ENCODE measurements at regions of chr21 and their contacts with region 1.

Region 1: DNA sequence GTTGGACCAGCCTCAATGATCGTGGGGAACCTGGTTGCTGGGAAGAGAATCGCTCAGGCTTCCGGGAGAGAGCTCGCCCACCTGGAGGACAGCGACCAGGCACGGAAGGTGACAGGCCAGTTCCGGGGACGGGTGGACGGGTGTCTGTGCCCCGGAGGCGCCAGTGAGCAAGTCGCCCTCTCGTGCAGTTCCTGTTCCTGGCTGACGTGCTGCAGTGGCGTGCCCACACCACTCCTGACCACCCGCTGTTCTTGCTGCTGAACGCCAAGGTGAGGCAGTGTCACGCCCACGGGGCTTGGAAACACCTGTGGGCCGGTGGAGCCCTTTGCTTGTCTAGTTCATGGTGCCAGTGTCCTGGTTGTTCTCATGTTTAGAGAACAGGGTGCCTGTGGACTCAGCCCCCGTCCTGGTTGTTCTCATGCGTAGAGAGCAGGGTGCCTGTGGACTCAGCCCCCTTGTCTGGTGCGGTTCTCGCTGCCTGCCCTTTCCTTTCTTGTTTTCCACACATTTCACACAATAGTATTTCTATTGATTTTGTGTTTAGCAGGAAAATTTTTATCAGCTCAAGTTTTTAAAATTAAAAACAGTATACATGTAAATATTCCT is 53.1 kb downstream of the S100B start:
- DNase-seq: peak in 9 of 10 donors; percentile 29 to 73 (median 50)
- ATAC-seq: peak; percentile 27 to 43
- H3K4me3 Mint-ChIP-seq: peak overlapping the region; percentile 62 to 90 (median 85)
- H3K27ac Mint-ChIP-seq: peak overlapping the region; percentile 97 to 100 (median 99)
- H3K4me1 Mint-ChIP-seq: peaks cover 39 to 91% (median 83%) of the 10 kb centered on the region in 4 donors
- H3K27me3 Mint-ChIP-seq: no peaks in the 10 kb centered on the region

Region 2: DNA sequence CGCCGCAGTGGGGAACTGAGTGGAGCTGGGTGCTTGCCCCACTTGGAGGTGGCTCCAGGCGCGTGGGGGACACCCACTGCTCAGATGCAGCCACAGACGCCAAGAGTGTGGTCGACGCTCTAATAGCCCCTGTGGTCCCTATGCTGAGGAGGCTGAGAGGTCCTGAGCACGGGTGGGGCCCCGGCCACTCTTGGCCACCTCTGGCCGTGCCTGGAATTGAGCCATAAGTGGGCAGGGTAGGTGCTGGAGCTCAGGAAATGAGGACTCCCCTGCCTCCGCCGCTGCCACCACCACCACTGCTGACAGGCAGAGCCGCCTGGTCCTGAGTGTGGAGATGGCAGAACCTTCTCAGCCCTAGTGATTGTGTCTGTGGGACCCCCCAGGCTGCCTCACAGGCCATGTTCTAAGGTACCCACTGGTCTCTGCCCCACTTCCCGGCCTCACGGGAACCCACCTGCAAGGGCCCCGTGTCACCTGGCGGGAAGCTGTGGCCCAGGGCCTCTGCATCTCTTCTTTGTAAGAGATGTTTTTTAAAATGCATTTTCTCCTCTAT is 127.6 kb before region 1 on chr21:
- POLR2A ChIA-PET with region 1: interaction called, 35 read pairs
- DNase-seq: peak in 8 of 10 donors; percentile 25 to 74 (median 50)
- ATAC-seq: peak; percentile 27 to 54
- H3K4me3 Mint-ChIP-seq: peak overlapping the region; percentile 72 to 92 (median 88)
- H3K27ac Mint-ChIP-seq: peak overlapping the region; percentile 94 to 100 (median 99)
- H3K4me1 Mint-ChIP-seq: peaks cover 13 to 46% (median 43%) of the 10 kb centered on the region in 4 donors
- H3K27me3 Mint-ChIP-seq: no peaks in the 10 kb centered on the region

Region 3: DNA sequence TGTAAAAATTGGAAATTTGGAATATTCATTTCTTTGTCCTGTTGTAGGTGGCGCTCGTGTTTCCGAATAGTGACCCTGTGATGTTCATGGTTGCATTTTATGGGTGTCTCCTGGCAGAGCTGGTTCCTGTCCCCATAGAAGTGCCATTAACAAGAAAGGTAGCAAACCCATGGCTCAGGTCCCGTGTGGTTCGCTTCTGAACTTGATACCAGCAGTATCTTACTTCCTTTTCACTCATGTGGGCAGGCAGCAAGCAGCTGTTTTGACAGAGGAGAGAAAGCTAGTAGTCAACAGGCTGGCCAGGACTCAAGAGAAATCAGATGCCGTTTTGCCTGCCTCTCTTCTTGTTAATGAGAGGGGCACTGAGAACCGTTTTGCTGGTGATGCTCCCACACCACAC is 19.7 kb before region 1 on chr21:
- POLR2A ChIA-PET with region 1: interaction called, 71 read pairs
- DNase-seq: peak in 9 of 10 donors; percentile 23 to 81 (median 64)
- ATAC-seq: peak; percentile 98
- H3K4me3 Mint-ChIP-seq: peak overlapping the region in 9 of 10 donors; percentile 53 to 83 (median 66)
- H3K27ac Mint-ChIP-seq: peak overlapping the region; percentile 82 to 96 (median 92)
- H3K4me1 Mint-ChIP-seq: peaks cover 22 to 81% (median 69%) of the 10 kb centered on the region in 4 donors
- H3K27me3 Mint-ChIP-seq: no peaks in the 10 kb centered on the region

Region 4: DNA sequence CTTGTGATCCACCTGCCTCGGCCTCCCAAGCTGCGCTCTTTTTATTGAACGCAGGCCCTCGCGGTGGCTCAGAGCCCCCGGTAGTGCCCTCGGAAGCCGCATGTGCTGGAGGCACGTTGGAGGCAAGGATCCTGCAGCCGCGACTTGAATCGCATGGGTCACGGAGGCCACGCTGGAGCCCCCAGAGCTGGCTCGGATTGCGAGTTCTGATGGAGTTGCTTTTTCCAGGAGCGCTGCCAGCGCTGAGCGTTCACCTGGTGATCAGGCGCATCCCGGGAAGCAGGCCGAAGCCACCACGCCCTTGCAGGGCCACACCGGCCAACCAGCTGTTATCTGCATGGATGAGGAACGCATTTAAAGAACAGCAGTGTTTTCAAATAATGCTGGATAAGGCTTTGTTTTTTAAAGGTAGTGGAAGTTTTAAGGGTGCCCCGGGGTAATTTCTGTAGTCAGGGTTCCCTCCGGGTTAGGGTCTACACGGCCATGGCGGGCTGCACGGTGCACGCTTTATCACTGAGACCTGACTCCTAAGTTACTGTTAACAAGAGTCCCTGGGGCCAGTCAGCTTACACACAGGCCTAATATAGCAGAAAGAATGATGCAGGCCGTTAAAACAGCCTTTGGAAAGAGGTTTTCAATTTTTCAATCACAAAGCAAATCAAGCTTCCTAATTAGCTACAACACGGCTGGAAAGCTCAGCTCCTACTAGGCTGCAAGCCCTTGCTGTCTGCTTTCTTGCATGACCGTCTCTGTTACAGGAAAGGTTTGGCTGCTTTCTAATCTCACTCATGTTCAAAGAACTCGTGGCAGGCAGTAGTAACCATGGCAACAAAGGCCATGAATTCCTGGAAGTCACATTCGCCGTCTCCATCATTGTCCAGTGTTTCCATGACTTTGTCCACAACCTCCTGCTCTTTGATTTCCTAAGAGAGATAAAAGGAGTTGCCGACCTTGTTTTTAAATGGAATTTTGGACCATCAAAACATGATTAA is 47.1 kb after region 1 on chr21:
- POLR2A ChIA-PET with region 1: interaction called, 46 read pairs
- DNase-seq: peak in 1 of 10 donors; percentile 33
- ATAC-seq: peak; percentile 61 to 62
- H3K4me3 Mint-ChIP-seq: peak overlapping the region in 6 of 10 donors; percentile 1 to 42 (median 36)
- H3K27ac Mint-ChIP-seq: peak overlapping the region; percentile 12 to 92 (median 75)
- H3K4me1 Mint-ChIP-seq: peaks cover 19 to 47% (median 33%) of the 10 kb centered on the region in 4 donors
- H3K27me3 Mint-ChIP-seq: no peaks in the 10 kb centered on the region

Region 5: GRCh38 chr21:46622226-46622625 is 70.5 kb after region 1 on chr21:
- POLR2A ChIA-PET with region 1: interaction called, 56 read pairs
- DNase-seq: peak; percentile 17 to 88 (median 74)
- ATAC-seq: peak; percentile 73 to 79
- H3K4me3 Mint-ChIP-seq: peak overlapping the region; percentile 53 to 74 (median 66)
- H3K27ac Mint-ChIP-seq: peak overlapping the region; percentile 90 to 100 (median 98)
- H3K4me1 Mint-ChIP-seq: peaks cover 34 to 77% (median 64%) of the 10 kb centered on the region in 4 donors
- H3K27me3 Mint-ChIP-seq: no peaks in the 10 kb centered on the region

Measured in naive thymus-derived CD8-positive, alpha-beta T cell (primary cell).